ENCODE measurements at regions of chr17 and their contacts with region 1.

Region 1: DNA sequence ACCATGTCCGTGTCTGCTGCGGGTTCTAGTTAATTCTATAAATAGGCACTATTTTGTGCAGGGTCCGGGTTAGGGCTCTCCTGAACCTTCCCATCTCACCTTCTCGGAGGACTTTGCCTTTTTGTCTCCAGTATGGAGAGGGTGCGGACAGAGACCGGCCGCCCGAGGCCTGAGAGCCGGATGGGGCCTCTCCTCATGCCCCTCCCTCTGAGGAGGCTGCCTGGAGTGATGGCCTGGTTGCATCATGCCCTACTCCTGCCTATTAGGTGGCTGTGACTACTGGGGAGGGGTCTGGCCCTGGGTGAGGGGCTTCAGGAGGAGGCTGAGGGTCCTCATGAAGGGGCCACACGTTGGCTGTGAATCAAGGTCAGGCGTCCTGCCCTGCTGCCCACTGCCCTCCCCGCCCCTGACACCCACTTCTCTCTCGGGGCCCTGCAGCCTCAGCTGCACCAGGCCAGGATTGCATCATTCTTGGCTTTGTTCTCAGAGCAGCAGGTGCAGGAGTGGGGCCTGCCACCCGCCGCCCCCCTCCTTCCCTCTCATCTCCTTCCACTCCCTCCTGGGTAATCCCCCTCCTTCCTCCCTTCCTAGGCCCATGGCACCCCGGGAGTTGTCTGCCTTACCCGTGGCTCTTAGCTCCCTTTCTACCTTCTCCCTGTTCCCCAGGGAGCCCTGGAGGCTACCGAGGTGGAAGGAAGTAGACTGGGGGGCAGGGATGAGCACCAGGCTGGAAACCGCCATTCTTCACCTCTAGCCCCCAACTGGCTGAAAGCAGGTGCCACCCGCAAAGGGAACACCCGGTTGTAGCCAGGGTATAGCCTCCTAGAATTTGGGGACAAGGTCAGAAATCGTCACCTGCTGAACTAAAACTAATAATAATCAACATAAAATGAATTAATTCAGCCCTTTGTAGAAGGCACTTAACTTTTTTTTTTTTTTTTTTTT is 12.7 kb upstream of the ARHGAP23 start:
- DNase-seq: peak in 1 of 2 experiments; percentile 64
- ATAC-seq: peak; percentile 66 to 75
- H3K4me3 ChIP-seq: peak overlapping the region; percentile 17; the same call in 2 of the 3 replicates
- H3K27ac ChIP-seq: peak overlapping the region; percentile 79 to 91
- H3K4me1 ChIP-seq: peaks cover 17% of the 10 kb centered on the region
- CTCF ChIP-seq: no peak
- EP300 ChIP-seq: peak in 1 of 2 experiments; percentile 26; a peak in 1 of 5 replicates
- POLR2A ChIP-seq: no peak
- RAD21 ChIP-seq: no peak

Region 2: GRCh38 chr17:37833237-37833859 is 582.2 kb before region 1 on chr17:
- CTCF ChIA-PET with region 1: no interaction called
- POLR2A ChIA-PET with region 1: interaction called, 10 read pairs
- DNase-seq: no peak
- ATAC-seq: no peak
- H3K4me3 ChIP-seq: no peak overlapping the region
- H3K27ac ChIP-seq: no peak overlapping the region
- H3K4me1 ChIP-seq: peaks cover 9% of the 10 kb centered on the region
- CTCF ChIP-seq: no peak
- EP300 ChIP-seq: no peak
- POLR2A ChIP-seq: no peak
- RAD21 ChIP-seq: no peak

Region 3: GRCh38 chr17:38364741-38365140 is 50.8 kb before region 1 on chr17:
- CTCF ChIA-PET with region 1: interaction called, 27 read pairs
- POLR2A ChIA-PET with region 1: no interaction called
- DNase-seq: no peak
- ATAC-seq: no peak
- H3K4me3 ChIP-seq: no peak overlapping the region
- H3K27ac ChIP-seq: no peak overlapping the region
- H3K4me1 ChIP-seq: no peaks in the 10 kb centered on the region
- CTCF ChIP-seq: no peak
- EP300 ChIP-seq: no peak
- POLR2A ChIP-seq: no peak
- RAD21 ChIP-seq: no peak

Region 4: GRCh38 chr17:38397227-38397626 is 18.3 kb before region 1 on chr17:
- CTCF ChIA-PET with region 1: interaction called, 38 read pairs
- POLR2A ChIA-PET with region 1: no interaction called
- DNase-seq: no peak
- ATAC-seq: no peak
- H3K4me3 ChIP-seq: no peak overlapping the region
- H3K27ac ChIP-seq: no peak overlapping the region
- H3K4me1 ChIP-seq: no peaks in the 10 kb centered on the region
- CTCF ChIP-seq: no peak
- EP300 ChIP-seq: no peak
- POLR2A ChIP-seq: no peak
- RAD21 ChIP-seq: no peak

Region 5: DNA sequence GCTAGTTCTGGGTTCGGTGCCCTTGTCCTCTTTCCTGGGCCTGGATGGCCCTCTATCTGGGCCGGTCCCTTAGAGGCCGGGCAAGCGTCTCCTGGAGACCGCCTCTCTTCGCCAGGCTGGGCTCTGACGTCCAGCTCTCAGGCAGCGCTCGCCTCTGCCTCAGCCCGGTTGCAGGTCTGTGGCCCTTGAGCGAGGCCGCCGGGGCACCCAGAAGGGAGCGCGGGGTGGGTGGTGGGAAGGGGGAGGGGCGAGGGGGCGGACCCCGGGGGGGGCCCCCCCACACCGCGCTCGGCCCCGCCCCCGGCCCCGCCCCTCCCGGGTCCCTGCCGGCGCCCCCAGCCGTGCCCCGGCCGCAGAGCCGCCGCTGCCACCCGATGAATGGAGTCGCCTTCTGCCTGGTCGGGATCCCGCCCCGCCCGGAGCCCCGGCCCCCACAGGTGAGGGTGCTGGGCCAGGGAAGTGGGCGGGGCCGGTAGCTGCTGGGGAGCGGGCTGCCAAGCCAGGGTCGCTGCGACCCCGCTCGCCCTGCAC is 12.7 kb after region 1 on chr17 and contains the start of gene ARHGAP23:
- CTCF ChIA-PET with region 1: interaction called, 80 read pairs
- POLR2A ChIA-PET with region 1: no interaction called
- DNase-seq: peak; percentile 57 to 60
- ATAC-seq: peak; percentile 62 to 64
- H3K4me3 ChIP-seq: peak within 1 kb of the TSS; percentile 90
- H3K27ac ChIP-seq: peak within 1 kb of the TSS; percentile 77 to 95
- H3K4me1 ChIP-seq: peaks cover 29% of the 10 kb centered on the region
- CTCF ChIP-seq: no peak
- EP300 ChIP-seq: no peak
- POLR2A ChIP-seq: peak; percentile 40
- RAD21 ChIP-seq: no peak
- polyA plus RNA-seq, gene ARHGAP23: 4.8 and 5.5 TPM in 2 replicates

Region 6: DNA sequence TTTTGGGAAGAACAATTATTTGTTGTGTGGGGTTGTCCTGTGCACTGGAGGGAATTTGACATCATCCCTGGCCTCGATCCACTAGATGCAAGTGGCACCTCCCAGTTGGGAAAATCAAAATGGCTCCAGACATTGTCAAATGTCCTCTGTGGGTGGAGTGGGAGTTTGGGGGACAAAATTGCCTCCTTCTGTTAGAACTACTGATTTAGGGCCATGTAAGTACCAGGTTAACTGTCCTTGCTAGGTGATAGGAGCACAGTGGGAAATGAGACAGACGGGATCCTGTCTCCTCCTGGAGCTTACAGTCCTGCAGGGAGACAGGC is 69.6 kb after region 1 on chr17:
- CTCF ChIA-PET with region 1: interaction called, 13 read pairs
- POLR2A ChIA-PET with region 1: no interaction called
- DNase-seq: no peak
- ATAC-seq: no peak
- H3K4me3 ChIP-seq: no peak overlapping the region
- H3K27ac ChIP-seq: no peak overlapping the region
- H3K4me1 ChIP-seq: no peaks in the 10 kb centered on the region
- CTCF ChIP-seq: no peak
- EP300 ChIP-seq: no peak
- POLR2A ChIP-seq: no peak
- RAD21 ChIP-seq: no peak

Region 7: DNA sequence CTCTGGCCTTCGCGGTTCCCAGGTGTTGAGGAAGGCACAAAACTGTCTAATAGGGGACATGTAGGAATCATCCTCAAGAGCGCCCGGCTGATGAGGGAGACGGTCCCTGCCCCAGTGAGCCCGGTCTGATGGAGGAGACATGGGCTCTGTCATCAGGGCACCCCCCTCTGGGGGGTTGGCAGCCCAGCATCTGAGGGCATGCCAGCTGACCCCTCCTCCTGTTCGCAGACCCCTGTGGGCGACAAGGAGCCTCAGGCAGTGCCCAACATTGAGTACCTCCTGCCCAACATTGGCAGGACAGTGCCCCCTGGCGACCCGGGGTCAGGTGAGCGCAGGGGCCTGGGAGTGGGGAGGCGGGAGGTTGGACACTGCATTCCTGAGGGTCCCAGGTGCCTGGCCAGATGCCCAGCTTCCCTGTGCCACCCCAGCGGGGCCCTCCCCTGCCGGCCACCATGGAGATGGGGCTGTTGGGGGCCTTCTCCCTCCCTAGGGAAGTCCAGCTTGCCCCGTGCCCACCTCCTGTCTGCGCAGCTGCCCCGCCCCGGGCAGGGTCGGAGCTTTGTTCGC is 82.7 kb after region 1 on chr17:
- CTCF ChIA-PET with region 1: no interaction called
- POLR2A ChIA-PET with region 1: no interaction called
- DNase-seq: no peak
- ATAC-seq: no peak
- H3K4me3 ChIP-seq: no peak overlapping the region
- H3K27ac ChIP-seq: no peak overlapping the region
- H3K4me1 ChIP-seq: no peaks in the 10 kb centered on the region
- CTCF ChIP-seq: no peak
- EP300 ChIP-seq: no peak
- POLR2A ChIP-seq: no peak
- RAD21 ChIP-seq: no peak

Region 8: DNA sequence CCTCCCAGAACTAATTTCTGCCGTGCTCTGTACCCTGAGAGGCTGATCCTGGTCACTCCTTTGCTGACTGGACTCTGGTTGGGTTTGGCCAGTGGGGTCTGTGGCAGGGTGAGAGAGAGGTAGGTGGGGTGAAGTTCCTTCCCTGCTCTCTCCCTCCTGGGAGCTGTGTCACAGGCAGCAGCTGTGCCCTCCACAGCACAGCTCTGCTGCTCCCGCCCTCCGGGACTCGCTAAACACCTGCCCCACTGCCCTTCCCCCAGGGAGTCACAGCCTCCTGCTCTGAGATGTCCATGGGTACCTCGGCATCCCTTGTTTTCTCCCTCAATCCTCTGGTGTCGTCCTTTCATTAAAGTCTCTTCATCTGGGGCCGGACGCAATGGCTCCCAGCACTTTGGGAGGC is 123.9 kb after region 1 on chr17:
- CTCF ChIA-PET with region 1: no interaction called
- POLR2A ChIA-PET with region 1: no interaction called
- DNase-seq: no peak
- ATAC-seq: no peak
- H3K4me3 ChIP-seq: no peak overlapping the region
- H3K27ac ChIP-seq: no peak overlapping the region
- H3K4me1 ChIP-seq: no peaks in the 10 kb centered on the region
- CTCF ChIP-seq: no peak
- EP300 ChIP-seq: no peak
- POLR2A ChIP-seq: no peak
- RAD21 ChIP-seq: no peak

Measured in A549 (cell line).